ENCODE measurements at regions of chr5 and their contacts with region 1.

Region 1: DNA sequence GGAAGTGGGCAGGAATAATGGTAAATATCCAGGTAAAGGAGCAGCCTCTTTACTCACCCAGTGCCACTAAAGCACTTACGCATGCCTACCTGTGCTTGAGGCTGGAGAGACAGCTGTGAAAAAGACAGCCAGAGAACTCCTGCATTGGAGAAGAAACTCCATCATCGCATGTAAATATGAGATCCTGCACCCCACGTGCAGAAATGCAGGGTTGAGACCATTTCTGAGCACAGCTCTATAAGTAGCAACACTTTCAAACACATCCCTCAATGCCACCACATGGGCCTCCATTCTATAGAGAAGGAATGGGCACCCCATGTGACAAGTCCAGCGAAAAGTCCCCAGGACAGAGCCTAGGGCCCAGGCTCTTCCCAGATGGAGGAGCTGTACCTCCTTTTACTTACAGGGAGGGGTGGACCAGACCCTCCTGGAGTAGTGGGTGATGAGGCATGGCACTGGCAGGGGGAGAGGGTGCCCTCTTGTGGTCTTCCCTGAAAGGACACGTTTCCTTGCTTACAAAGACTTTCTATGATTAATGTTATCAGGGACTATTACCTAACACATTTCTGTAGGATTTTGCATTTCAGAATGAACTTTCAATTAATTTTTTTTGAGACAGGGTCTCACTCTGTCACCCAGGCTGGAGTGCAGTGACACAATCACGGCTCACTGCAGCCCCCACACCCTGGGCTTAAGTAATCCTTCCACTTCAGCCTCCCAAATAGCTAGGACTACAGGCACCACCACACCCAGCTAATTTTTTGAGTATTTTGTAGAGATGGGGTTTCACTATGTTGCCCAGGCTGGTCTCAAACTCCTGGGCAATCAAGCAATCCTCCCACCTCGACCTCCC is 55.3 kb upstream of the IL17B start:
- DNase-seq: peak; percentile 52 to 73 (median 65)
- H3K4me3 ChIP-seq: no peak overlapping the region
- H3K27ac ChIP-seq: no peak overlapping the region
- H3K4me1 ChIP-seq: peaks cover 0 to 38% (median 24%) of the 10 kb centered on the region in 4 experiments
- H3K27me3 ChIP-seq: no peaks in the 10 kb centered on the region

Region 2: DNA sequence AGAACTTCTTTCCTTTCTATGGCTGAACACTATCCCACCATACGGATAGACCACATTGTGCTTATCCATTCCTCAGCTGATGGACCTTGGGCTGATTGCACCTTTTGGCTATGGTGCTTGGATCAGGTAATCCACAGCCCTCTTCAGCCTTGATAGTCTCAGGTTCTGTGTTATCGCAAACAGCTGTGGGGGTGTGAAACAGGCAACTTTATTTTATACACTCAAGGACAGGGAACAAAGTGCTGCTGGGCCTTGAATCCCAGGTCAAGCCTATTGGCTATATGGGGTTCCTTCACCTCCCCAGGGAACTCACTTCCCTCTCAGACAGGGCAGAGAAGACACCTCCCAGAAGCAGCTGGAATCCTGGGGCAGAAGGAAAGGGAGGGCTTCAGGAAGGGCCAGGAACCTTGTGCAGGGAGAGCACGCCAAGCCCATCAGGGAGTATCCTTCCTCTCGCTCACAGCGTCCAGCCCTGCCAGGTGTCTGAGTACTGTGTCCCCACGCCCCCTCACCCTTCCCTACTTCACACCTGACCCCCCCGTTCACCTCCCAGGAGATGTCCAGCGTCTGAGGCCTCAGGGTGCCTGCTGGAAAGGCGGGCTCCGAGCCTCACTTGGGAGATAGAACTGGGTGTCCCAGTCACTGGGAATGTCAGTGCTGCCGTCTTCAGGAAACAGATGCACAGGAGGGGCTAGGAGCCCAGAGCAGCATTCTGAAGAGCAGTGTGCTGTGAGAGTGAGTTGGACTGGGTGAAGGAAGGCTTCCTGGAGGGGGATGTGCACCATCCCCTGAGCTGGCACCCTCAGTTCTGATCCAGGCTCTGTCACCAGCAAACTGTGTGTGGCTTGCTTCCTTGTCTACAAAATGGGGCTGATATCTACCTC is 130.0 kb before region 1 on chr5:
- CTCF ChIA-PET with region 1: no interaction called
- POLR2A ChIA-PET with region 1: no interaction called
- DNase-seq: no peak
- H3K4me3 ChIP-seq: no peak overlapping the region
- H3K27ac ChIP-seq: no peak overlapping the region
- H3K4me1 ChIP-seq: peaks cover 0 to 37% (median 20%) of the 10 kb centered on the region in 4 experiments
- H3K27me3 ChIP-seq: no peaks in the 10 kb centered on the region

Region 3: GRCh38 chr5:149381987-149382340 is 52.4 kb before region 1 on chr5:
- CTCF ChIA-PET with region 1: interaction called, 124 read pairs
- POLR2A ChIA-PET with region 1: no interaction called
- DNase-seq: peak; percentile 61 to 78 (median 72)
- H3K4me3 ChIP-seq: no peak overlapping the region
- H3K27ac ChIP-seq: no peak overlapping the region
- H3K4me1 ChIP-seq: peaks cover 0 to 8% (median 6%) of the 10 kb centered on the region in 4 experiments
- H3K27me3 ChIP-seq: no peaks in the 10 kb centered on the region

Region 4: DNA sequence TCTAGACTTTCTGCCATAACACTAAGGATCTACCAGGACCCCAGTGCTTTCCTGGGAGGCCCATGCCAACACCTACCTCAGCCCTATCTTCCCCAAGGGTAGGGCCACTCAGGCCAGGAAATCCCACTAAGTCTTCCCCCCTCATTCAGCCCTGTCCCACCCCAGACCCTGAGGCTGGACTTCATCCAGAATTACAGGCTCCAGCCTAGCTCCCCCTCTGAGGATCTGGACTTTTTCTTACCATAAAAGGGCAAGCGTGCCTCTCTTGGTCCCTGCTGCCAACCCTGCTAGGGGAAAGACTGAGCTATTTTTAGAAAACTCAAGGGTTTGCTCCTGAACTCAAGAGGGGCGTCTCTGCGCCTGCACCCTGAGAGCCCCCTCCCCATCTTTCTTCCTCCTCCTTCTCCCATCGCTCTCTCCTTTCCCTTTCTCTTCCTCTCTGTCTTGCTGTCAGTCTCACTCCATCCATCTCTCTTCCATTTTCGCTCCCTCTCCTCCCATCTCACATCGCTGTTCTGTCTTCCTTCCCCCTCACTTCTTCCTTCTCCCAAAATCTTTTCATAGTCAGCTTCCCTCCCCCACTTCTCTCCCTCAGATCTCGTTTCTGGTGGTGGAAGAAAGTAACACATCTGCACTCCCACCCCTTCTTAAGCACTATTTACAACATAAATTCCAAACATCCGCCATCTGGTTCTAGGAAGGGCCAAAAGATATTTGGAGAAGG is 17.2 kb before region 1 on chr5:
- CTCF ChIA-PET with region 1: interaction called, 61 read pairs
- POLR2A ChIA-PET with region 1: no interaction called
- DNase-seq: no peak
- H3K4me3 ChIP-seq: no peak overlapping the region
- H3K27ac ChIP-seq: no peak overlapping the region
- H3K4me1 ChIP-seq: peaks cover under 1 to 26% (median 7%) of the 10 kb centered on the region in 4 experiments
- H3K27me3 ChIP-seq: no peaks in the 10 kb centered on the region

Region 5: GRCh38 chr5:149448831-149449714 is 14.7 kb after region 1 on chr5:
- CTCF ChIA-PET with region 1: interaction called, 49 read pairs
- POLR2A ChIA-PET with region 1: no interaction called
- DNase-seq: peak in 1 of 3 donors; percentile 38
- H3K4me3 ChIP-seq: no peak overlapping the region
- H3K27ac ChIP-seq: no peak overlapping the region
- H3K4me1 ChIP-seq: peaks cover 0 to 17% (median 13%) of the 10 kb centered on the region in 4 experiments
- H3K27me3 ChIP-seq: no peaks in the 10 kb centered on the region

Region 6: GRCh38 chr5:149567226-149567625 is 132.8 kb after region 1 on chr5:
- CTCF ChIA-PET with region 1: interaction called, 17 read pairs
- POLR2A ChIA-PET with region 1: no interaction called
- DNase-seq: no peak
- H3K4me3 ChIP-seq: no peak overlapping the region
- H3K27ac ChIP-seq: no peak overlapping the region
- H3K4me1 ChIP-seq: no peaks in the 10 kb centered on the region
- H3K27me3 ChIP-seq: no peaks in the 10 kb centered on the region

Region 7: DNA sequence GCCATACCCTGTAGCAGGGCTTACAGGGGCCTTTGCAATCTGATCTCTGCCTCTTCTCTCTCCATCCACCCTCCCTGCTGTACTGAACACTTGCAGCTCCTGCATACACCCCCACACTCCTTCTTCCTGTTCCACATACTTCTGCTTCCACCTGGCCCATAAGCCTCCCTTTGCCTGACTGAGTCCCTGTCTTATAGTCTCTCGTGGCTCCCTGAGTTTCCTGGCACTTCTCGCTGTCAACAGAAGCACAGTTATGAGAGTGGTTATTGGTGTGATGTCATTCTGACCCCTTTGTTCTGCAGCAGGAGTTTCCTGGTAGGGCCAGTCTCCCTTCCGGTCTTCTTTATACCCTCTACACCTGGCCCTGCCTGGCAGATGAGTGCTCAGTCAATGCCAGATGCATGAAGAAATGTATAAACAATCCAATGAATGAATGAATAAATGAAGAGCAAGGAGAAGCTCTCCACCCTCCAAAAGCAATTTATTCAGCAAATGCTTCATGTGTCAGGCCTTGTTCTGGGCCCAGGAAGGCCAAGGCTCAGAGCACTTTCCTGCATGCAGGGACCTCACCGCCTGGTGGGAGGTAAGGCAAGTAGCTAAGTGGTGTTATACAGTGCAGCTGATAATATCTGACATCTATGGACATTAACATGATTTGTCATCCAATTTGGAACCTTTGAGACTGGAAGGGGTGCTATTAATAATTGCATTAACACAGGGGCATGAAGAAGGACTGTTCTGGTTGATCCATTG is 672.5 kb after region 1 on chr5:
- CTCF ChIA-PET with region 1: no interaction called
- POLR2A ChIA-PET with region 1: no interaction called
- DNase-seq: peak in 1 of 3 donors; percentile 25
- H3K4me3 ChIP-seq: no peak overlapping the region
- H3K27ac ChIP-seq: no peak overlapping the region
- H3K4me1 ChIP-seq: peaks cover 0 to 40% (median 10%) of the 10 kb centered on the region in 4 experiments
- H3K27me3 ChIP-seq: no peaks in the 10 kb centered on the region